Thyroid gland (tissue), 4 donors: ENCODE measurements at regions of chr2 and their contacts with region 1.

Region 1: DNA sequence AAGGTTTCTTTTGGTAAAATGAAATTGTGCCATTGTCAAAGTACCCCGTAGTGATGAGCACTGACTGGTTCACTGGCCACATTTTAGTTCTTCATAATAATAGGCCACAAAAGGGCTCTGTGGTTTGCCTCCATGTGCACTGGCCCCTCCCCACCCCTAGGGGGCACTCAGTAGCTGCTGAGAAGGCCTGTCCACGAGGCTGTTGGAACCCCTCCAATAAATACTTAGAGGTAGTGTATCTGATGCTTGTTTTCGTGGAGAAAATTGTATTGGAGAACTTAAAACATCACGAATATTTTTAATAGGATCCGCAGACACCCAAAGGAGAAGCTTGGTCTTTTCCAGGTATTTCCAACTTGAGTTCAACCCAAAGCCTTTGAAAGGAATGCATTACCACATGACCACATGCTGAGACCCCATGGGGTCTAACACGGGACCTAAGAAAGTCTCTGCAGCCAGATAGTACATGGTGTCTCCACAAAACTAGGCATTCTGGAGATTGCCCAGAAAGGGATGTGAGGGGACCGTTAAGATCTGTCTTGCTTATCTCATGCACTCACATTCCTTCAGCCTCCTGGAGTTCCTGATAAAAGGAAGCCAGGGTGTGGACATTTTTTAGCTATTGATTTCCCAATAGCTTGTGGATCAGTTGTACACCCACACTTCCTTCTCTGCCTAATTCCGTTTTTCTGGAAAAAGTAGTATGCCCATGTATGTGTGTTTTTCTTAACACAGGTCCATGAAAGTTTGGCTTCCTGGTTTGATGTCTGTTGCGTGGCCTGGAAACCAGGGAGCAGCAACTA is 28.5 kb upstream of the NOSTRIN start:
- DNase-seq: peak; percentile 72 to 79
- H3K4me3 ChIP-seq: no peak overlapping the region
- H3K27ac ChIP-seq: no peak overlapping the region
- H3K4me1 ChIP-seq: peaks cover 5 to 9% of the 10 kb centered on the region in 2 donors
- H3K27me3 ChIP-seq: no peaks in the 10 kb centered on the region
- CTCF ChIP-seq: peak; percentile 88 to 98 (median 94)
- POLR2A ChIP-seq: no peak

Region 2: DNA sequence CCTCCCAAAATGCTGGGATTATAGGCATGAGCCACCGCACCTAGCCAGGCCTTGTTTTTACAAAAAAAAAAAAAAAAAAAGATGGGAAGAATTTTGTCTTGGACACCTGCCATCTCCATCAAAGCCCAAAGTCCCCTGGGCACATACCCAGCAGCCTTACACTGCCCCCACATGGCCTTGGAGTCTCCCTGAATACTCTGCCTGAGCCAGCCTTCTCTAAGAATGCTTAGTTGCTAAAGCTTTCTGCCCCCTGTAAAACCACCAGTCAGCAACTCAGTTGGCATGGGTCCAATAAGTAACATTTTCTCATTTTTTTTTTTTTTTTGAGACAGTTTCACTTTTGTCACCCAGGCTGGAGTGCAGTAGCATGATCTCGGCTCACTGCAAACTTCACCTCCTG is 75.7 kb after region 1 on chr2:
- intact Hi-C with region 1: loop called (anchors 10 kb)
- DNase-seq: peak; percentile 79 to 82
- H3K4me3 ChIP-seq: no peak overlapping the region
- H3K27ac ChIP-seq: peak overlapping the region; percentile 13 to 71 (median 24)
- H3K4me1 ChIP-seq: peaks cover 5 to 8% of the 10 kb centered on the region in 2 donors
- H3K27me3 ChIP-seq: no peaks in the 10 kb centered on the region
- CTCF ChIP-seq: peak in 4 of 6 experiments; percentile 61 to 76 (median 68)
- POLR2A ChIP-seq: no peak

Region 3: GRCh38 chr2:168920504-168921157 is 146.7 kb after region 1 on chr2:
- intact Hi-C with region 1: loop called (anchors 2 kb)
- DNase-seq: no peak
- H3K4me3 ChIP-seq: no peak overlapping the region
- H3K27ac ChIP-seq: no peak overlapping the region
- H3K4me1 ChIP-seq: no peaks in the 10 kb centered on the region
- H3K27me3 ChIP-seq: no peaks in the 10 kb centered on the region
- CTCF ChIP-seq: peak; percentile 22 to 75 (median 52)
- POLR2A ChIP-seq: no peak

Region 4: GRCh38 chr2:169526451-169526850 is 752.5 kb after region 1 on chr2:
- intact Hi-C with region 1: no loop called
- DNase-seq: no peak
- H3K4me3 ChIP-seq: no peak overlapping the region
- H3K27ac ChIP-seq: no peak overlapping the region
- H3K4me1 ChIP-seq: no peaks in the 10 kb centered on the region
- H3K27me3 ChIP-seq: no peaks in the 10 kb centered on the region
- CTCF ChIP-seq: no peak
- POLR2A ChIP-seq: no peak